ENCODE measurements at regions of chr14 and their contacts with region 1.

Region 1: DNA sequence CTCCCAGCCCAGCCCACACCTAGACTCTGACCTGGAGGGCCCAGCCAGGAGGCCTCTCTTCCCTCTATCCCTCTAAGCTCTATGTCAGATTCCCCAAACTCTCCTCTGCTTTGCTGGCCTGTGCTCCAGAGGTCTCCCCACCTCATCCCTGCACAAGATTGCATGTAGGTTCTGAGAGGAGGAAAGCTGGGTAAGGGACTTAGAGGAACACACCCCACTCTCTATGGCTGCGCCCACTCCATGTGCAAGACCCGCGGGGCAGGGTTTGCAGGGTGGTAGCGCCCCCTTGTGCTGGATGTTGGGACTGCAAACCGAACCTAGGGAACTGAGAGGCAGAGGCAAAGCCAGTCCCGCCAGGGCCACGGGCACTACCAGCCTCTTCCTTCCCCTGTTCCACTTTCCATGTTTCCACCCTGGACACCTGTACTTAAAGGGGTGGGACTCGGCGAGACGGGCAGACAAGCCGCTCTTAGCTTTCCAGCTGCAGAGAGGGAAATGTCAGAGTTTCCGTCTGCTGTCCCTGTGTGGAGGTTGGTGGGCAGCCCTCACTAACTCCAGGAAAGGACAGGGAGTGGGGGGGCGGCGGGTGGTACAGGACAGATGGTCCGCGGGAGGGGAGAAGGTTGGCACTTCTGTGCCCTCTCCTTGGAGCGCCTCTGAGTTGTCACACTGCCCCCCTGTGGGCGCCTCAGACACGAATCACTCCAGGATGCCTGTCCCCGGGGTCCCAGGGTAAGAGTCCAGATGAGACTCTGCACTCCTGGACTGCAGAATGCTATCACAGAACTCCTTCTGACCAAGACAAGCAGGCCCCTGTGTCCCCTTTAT is 16.8 kb downstream of the MMP14 start:
- DNase-seq: peak; percentile 84 to 88 (median 87)
- H3K4me3 ChIP-seq: peak overlapping the region in 6 of 7 experiments; percentile 23 to 74 (median 60)
- H3K27ac ChIP-seq: no peak overlapping the region
- H3K4me1 ChIP-seq: peaks cover 0 to 34% (median 29%) of the 10 kb centered on the region in 4 experiments
- H3K27me3 ChIP-seq: peaks cover 2 to 42% (median 5%) of the 10 kb centered on the region in 5 experiments

Region 2: GRCh38 chr14:22580625-22581024 is 272.5 kb before region 1 on chr14:
- CTCF ChIA-PET with region 1: no interaction called
- POLR2A ChIA-PET with region 1: no interaction called
- DNase-seq: no peak
- H3K4me3 ChIP-seq: no peak overlapping the region
- H3K27ac ChIP-seq: no peak overlapping the region
- H3K4me1 ChIP-seq: peaks cover 8 to 30% (median 18%) of the 10 kb centered on the region in 4 experiments
- H3K27me3 ChIP-seq: no peaks in the 10 kb centered on the region

Region 3: GRCh38 chr14:22653012-22653621 is 200.0 kb before region 1 on chr14:
- CTCF ChIA-PET with region 1: interaction called, 13 read pairs
- POLR2A ChIA-PET with region 1: no interaction called
- DNase-seq: peak; percentile 56 to 76 (median 75)
- H3K4me3 ChIP-seq: no peak overlapping the region
- H3K27ac ChIP-seq: no peak overlapping the region
- H3K4me1 ChIP-seq: peaks cover 0 to 2% (median 0%) of the 10 kb centered on the region in 4 experiments
- H3K27me3 ChIP-seq: peaks cover 0 to 3% (median 0%) of the 10 kb centered on the region in 5 experiments

Region 4: DNA sequence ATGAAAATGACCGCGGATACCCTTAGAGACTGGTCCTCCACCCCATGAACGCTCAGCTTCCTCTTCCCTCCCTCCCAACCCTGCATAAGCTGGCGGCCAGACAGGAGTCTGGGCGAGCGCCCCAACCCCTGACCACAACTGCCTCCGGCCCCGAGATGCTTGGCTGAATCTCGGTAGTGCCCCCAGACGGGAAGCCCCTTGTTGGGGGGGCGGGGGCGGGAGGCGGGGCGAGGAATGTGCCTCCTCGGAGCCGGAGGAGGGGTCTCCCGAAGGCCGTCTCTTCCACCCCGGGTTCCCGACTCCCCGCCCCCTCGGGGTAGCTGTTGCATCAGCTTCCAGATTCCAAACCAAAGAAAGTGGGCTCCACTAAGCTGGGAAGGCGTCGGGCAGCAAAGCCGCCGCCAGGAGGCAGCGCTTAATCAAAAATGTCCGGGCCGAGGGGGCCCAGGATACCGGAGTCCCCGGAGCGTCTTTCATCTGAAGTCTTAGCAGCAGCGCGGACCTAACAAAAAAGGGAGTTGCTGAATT is 30.5 kb before region 1 on chr14:
- CTCF ChIA-PET with region 1: interaction called, 707 read pairs
- POLR2A ChIA-PET with region 1: interaction called, 14 read pairs
- DNase-seq: peak; percentile 70 to 74 (median 73)
- H3K4me3 ChIP-seq: peak overlapping the region in 6 of 7 experiments; percentile 20 to 62 (median 42)
- H3K27ac ChIP-seq: no peak overlapping the region
- H3K4me1 ChIP-seq: peaks cover 12 to 38% (median 36%) of the 10 kb centered on the region in 4 experiments
- H3K27me3 ChIP-seq: peaks cover 0 to 29% (median 2%) of the 10 kb centered on the region in 5 experiments

Region 5: DNA sequence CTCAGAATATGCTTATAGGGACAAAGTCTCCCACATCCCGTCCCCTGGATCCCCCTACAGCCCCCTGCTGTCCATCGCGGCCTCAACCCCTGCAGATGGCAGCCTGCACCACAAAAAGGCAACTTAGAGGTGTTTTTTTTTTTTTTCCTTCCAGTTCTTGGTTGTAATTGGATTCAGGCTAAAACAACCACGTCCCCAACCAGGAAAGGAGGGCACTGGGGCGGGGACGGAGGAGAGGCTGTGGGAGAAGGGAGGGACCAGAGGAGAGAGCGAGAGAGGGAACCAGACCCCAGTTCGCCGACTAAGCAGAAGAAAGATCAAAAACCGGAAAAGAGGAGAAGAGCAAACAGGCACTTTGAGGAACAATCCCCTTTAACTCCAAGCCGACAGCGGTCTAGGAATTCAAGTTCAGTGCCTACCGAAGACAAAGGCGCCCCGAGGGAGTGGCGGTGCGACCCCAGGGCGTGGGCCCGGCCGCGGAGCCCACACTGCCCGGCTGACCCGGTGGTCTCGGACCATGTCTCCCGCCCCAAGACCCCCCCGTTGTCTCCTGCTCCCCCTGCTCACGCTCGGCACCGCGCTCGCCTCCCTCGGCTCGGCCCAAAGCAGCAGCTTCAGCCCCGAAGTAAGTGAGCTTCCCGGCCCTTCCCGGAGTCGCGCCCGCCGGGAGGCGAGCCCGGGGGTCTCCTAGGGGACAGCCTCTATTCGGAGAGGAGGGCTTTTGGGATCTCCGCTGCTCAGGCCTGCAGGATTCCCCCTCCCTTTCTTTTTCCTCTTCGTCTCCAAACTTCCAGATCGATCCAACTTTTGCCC is 16.6 kb before region 1 on chr14 and contains the start of gene MMP14:
- CTCF ChIA-PET with region 1: interaction called, 707 read pairs
- POLR2A ChIA-PET with region 1: interaction called, 16 read pairs
- DNase-seq: peak in 1 of 3 donors; percentile 23
- H3K4me3 ChIP-seq: peak within 1 kb of the TSS; percentile 3 to 78 (median 62)
- H3K27ac ChIP-seq: no peak within 1 kb of the TSS
- H3K4me1 ChIP-seq: peaks cover 0 to 37% (median 29%) of the 10 kb centered on the region in 4 experiments
- H3K27me3 ChIP-seq: peaks cover 0 to 39% (median 7%) of the 10 kb centered on the region in 5 experiments

Region 6: DNA sequence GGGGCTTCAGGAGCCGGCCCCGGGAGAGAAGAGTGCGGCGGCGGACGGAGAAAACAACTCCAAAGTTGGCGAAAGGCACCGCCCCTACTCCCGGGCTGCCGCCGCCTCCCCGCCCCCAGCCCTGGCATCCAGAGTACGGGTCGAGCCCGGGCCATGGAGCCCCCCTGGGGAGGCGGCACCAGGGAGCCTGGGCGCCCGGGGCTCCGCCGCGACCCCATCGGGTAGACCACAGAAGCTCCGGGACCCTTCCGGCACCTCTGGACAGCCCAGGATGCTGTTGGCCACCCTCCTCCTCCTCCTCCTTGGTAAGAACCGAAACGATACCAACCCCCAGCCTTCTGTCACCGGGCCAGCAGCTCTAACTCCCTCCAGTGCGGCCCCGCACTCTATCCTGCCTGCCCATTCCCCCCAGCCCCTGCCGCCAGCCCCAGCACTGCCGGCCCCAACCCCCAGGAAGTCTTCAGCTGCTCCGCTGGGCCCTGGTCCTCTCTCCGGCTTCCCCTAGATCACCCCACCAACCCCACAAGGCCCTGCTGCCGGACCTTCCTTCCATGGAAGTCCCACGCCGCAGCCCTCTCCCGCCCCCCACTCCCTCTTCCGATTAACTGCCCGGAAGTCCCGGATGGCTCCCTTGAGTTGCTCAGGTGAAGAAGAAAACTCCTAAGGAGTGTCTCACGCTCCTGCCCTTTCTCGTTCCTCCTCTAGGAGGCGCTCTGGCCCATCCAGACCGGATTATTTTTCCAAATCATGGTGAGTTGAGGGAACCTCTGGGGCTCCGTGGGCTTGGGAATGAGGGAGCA is 19.1 kb after region 1 on chr14:
- CTCF ChIA-PET with region 1: interaction called, 44 read pairs
- POLR2A ChIA-PET with region 1: no interaction called
- DNase-seq: peak; percentile 61 to 65 (median 62)
- H3K4me3 ChIP-seq: peak overlapping the region; percentile 59 to 91 (median 78)
- H3K27ac ChIP-seq: peak overlapping the region; percentile 29 to 82
- H3K4me1 ChIP-seq: peaks cover 8 to 24% (median 22%) of the 10 kb centered on the region in 4 experiments
- H3K27me3 ChIP-seq: peaks cover 0 to 2% (median 0%) of the 10 kb centered on the region in 5 experiments

Measured in common myeloid progenitor, CD34-positive (primary cell).